ENCODE measurements at regions of chr4 and their contacts with region 1.

Region 1: GRCh38 chr4:82284858-82285805 is 88.7 kb downstream of the HNRNPD start:
- DNase-seq: peak; percentile 93 to 97
- H3K4me3 ChIP-seq: peak overlapping the region; percentile 64
- H3K27ac ChIP-seq: no peak overlapping the region
- H3K4me1 ChIP-seq: no peaks in the 10 kb centered on the region
- H3K27me3 ChIP-seq: no peaks in the 10 kb centered on the region
- CTCF ChIP-seq: peak; percentile 89

Region 2: GRCh38 chr4:81844717-81845116 is 440.4 kb before region 1 on chr4:
- CTCF ChIA-PET with region 1: no interaction called
- POLR2A ChIA-PET with region 1: no interaction called
- intact Hi-C with region 1: no loop called
- DNase-seq: peak; percentile 58 to 74
- H3K4me3 ChIP-seq: no peak overlapping the region
- H3K27ac ChIP-seq: no peak overlapping the region
- H3K4me1 ChIP-seq: no peaks in the 10 kb centered on the region
- H3K27me3 ChIP-seq: no peaks in the 10 kb centered on the region
- CTCF ChIP-seq: peak; percentile 60

Region 3: DNA sequence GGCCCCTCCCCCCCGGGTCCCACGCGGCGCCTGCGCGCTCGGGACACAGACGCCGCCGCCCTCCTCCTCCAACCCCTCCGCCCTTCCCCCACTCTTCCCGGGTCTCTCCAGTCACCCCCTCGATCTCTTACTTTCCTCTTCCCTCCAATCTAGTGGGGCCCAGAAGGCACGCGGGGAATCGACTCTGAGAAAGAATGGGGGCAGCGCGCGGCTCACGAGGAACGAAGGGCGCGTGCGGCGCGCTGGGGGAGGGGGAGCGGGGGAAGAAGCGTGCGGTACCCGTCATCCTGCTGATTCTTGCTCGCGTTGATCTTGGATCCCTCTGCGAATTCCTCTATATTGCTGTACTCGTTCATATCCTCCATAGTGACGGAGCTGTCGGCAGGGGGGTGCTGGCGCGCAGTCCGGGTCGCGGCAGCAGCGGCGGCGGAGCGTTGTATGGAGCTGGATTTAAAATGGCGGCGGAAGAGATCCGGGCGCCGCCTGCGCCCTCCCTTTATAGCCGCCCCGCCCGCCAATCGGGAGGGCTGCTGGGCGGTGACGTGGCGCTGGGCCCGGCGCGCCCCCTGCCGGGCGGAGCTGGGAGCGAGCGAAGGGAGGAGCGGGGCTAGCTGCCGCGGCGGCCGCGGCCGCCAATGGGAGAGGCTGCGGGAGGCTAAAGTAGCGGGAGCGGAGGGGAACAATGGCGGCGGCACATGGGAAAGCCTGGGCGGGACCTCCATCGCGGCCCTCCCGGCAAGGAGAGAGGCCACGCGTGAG is 144.0 kb after region 1 on chr4:
- CTCF ChIA-PET with region 1: no interaction called
- POLR2A ChIA-PET with region 1: no interaction called
- intact Hi-C with region 1: loop called (anchors 1 kb)
- DNase-seq: peak; percentile 68 to 87
- H3K4me3 ChIP-seq: peak overlapping the region; percentile 97
- H3K27ac ChIP-seq: peak overlapping the region; percentile 87
- H3K4me1 ChIP-seq: peaks cover 47% of the 10 kb centered on the region
- H3K27me3 ChIP-seq: no peaks in the 10 kb centered on the region
- CTCF ChIP-seq: peak; percentile 77

Region 4: GRCh38 chr4:82519040-82519439 is 233.9 kb after region 1 on chr4:
- CTCF ChIA-PET with region 1: no interaction called
- POLR2A ChIA-PET with region 1: no interaction called
- intact Hi-C with region 1: no loop called
- DNase-seq: peak in 1 of 2 experiments; percentile 49
- H3K4me3 ChIP-seq: no peak overlapping the region
- H3K27ac ChIP-seq: no peak overlapping the region
- H3K4me1 ChIP-seq: no peaks in the 10 kb centered on the region; the same call in 1 of the 2 replicates
- H3K27me3 ChIP-seq: no peaks in the 10 kb centered on the region
- CTCF ChIP-seq: no peak